Aorta (tissue), 5 donors: ENCODE measurements at regions of chr18 and their contacts with region 1.

Region 1: DNA sequence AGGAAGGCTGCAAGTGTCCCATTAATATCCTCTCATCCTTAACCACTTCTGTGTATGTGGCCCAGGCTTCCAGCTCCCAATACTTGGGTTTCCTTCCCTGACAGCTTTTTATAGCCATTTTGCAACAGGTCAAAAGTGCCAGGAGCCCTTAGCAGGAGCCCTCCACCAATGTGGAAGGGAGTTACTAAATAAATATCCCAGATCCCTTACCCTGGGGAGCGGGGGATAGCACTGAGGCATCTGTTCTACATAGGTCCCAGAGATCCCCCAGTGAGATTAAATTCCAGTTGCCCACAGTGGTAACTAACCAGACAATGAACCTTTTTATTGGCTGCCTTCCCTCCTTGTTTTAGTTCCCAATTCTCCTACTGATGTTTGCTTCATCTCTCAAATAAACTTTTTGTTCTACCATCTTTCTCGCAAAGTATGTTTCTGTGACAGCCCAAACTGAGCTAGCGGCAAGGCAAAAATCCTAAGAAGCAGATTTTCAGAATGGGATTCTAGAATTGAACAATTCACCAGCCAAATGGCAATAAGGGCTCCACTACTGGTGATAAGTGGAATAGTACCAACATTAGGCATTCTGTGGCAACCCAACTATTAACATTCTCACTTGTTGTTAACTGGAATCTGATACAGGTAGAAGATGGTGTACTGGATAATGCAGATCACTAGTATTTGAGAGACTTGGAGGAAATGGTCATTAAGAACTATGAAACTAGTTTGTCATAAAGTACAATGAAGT is 83.9 kb upstream of the MAPRE2 start:
- DNase-seq: no peak
- ATAC-seq: no peak
- H3K4me3 ChIP-seq: no peak overlapping the region
- H3K27ac ChIP-seq: no peak overlapping the region
- H3K4me1 ChIP-seq: no peaks in the 10 kb centered on the region
- H3K27me3 ChIP-seq: no peaks in the 10 kb centered on the region

Region 2: DNA sequence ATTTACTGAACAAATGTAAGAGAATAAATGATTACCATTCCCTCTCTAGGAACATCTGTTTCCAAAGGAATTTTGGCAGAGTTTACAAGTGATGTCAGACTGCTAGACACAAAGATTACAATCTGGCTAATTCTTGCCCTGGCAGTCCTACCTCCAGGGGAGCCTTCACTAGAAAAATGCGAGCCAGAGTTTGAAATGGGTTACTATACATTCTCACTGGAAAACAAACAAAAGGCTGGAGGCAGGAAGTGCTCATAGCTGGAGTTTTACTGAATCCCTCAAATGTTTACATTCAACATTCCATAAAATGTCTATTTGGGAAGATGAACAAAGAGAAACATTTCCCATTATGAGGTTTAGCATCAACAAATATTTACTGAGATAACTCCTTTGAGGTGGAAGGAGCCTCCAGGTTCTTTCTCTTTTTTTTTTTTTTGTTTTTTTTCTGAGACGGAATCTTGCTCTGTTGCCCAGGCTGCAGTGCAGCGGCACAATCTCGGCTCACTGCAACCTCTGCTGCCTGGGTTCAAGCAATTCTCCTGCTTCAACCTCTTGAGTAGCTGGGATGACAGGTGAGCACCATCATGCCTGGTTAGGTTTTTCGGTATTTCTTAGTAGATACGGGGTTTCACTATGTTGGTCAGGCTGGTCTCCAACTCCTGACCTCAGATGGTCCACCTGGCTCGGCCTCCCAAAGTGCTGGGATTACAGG is 45.1 kb before region 1 on chr18:
- intact Hi-C with region 1: loop called in 1 of 2 experiments (anchors 5 kb)
- DNase-seq: no peak
- ATAC-seq: no peak
- H3K4me3 ChIP-seq: no peak overlapping the region
- H3K27ac ChIP-seq: no peak overlapping the region
- H3K4me1 ChIP-seq: peaks cover 0 to 3% of the 10 kb centered on the region in 2 donors
- H3K27me3 ChIP-seq: no peaks in the 10 kb centered on the region